Activated naive CD4-positive, alpha-beta T cell treated with anti-CD3 and anti-CD28 coated beads for 36 hours (primary cell): ENCODE measurements at regions of chr2 and their contacts with region 1.

Region 1: DNA sequence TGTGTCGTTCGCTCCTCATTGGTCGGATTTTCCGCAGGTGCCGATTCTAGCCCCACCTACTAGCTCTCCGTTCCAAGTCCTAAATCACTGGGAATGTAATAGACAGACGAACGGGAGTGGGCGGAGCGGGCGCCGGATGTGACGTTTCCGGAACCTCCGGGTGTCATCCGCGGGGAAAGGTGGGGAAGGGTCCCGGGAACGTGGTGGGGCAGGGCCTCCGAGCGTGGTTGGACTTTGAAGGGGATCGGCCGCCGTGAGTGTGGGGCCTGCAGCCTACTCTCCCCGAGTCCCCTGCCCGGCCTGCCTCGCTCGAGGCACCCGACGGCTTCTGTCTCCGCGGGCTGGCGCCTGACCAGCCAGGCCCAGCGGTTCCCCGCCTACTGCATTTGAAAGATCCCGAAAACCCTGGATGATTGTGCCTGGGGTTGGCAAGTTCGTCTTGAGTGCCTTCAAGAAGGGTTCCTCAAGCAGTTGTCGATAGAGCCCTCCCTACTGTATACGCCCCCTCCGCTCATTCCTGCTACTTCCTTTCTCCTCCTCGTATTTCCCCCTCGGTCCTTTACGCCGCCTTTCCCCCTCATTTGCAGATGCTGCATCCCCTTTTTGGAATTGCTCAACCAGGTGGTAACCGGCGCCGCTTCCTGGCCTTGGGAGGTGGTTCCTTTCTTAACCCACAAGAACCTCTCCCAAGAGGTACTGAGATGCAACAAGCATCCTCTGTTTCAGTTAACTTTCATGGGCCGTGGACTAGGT is at the start of gene STAMBP:
- DNase-seq: peak; percentile 96
- H3K4me3 Mint-ChIP-seq: peak within 1 kb of the TSS; percentile 94
- H3K27ac Mint-ChIP-seq: peak within 1 kb of the TSS; percentile 94
- H3K4me1 Mint-ChIP-seq: peaks cover 43% of the 10 kb centered on the region
- H3K27me3 Mint-ChIP-seq: no peaks in the 10 kb centered on the region
- total RNA-seq, gene STAMBP: 80.5 to 80.7 TPM

Region 2: DNA sequence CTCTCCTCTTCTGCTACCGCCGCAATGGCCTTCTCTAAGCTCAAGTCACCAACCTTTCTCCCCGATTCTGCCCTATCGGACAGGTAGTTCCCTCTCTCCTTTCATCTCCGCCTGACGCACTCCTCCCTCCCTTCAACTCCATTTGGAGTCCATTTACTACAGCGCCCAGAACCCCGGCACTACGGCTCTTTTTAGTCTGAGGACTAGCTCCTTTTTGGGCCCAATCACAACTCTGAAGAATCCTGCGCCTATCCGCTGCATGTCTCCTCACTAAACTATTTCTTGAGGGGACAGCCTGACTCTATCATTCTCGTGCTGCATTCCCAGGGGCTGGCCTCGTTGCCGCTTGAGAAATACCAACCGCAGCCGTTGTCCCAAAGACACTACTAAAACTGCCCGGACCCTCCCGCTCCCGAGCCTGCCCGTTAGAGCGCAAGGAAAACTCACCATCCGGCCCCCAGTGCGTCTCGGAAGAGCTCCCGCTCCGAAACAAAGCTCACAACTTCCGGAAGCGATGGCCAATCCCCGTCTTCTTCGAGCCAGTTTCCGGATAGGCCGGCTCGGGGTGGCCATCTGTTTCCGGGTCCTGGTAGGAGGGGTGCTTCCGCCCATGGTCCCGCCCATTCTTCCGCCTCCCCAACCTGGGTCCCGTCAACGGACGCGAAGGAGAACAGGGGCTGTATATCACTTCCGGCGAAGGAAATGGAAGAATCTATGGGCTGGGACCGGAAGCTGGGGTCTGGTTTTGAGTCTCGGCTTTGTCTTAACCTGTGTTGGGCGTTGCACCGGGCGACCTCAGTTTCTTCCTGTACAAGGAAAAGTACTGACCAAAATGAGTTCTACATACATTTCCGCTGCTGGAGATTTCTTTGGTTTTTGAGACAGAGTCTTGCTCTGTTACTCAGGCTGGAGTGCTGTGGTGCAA is 91.9 kb before region 1 on chr2 and contains the start of gene TPRKB:
- CTCF ChIA-PET with region 1: interaction called, 3 read pairs
- intact Hi-C with region 1: loop called (anchors 1 kb)
- DNase-seq: peak; percentile 99
- H3K4me3 Mint-ChIP-seq: peak within 1 kb of the TSS; percentile 88
- H3K27ac Mint-ChIP-seq: peak within 1 kb of the TSS; percentile 76
- H3K4me1 Mint-ChIP-seq: peaks cover 15% of the 10 kb centered on the region
- H3K27me3 Mint-ChIP-seq: no peaks in the 10 kb centered on the region
- total RNA-seq, gene TPRKB: 30.5 to 32.5 TPM

Region 3: GRCh38 chr2:73859721-73860586 is 31.0 kb after region 1 on chr2:
- CTCF ChIA-PET with region 1: interaction called, 3 read pairs
- intact Hi-C with region 1: loop called (anchors 1 kb)
- DNase-seq: peak; percentile 73
- H3K4me3 Mint-ChIP-seq: no peak overlapping the region
- H3K27ac Mint-ChIP-seq: no peak overlapping the region
- H3K4me1 Mint-ChIP-seq: peaks cover 15% of the 10 kb centered on the region
- H3K27me3 Mint-ChIP-seq: no peaks in the 10 kb centered on the region

Region 4: GRCh38 chr2:73926493-73927338 is 97.7 kb after region 1 on chr2 and contains the start of gene DGUOK:
- CTCF ChIA-PET with region 1: interaction called, 8 read pairs
- intact Hi-C with region 1: loop called (anchors 1 kb)
- DNase-seq: peak; percentile 99
- H3K4me3 Mint-ChIP-seq: peak within 1 kb of the TSS; percentile 87
- H3K27ac Mint-ChIP-seq: peak within 1 kb of the TSS; percentile 94
- H3K4me1 Mint-ChIP-seq: peaks cover 44% of the 10 kb centered on the region
- H3K27me3 Mint-ChIP-seq: no peaks in the 10 kb centered on the region
- total RNA-seq, gene DGUOK: 112 to 115 TPM

Region 5: DNA sequence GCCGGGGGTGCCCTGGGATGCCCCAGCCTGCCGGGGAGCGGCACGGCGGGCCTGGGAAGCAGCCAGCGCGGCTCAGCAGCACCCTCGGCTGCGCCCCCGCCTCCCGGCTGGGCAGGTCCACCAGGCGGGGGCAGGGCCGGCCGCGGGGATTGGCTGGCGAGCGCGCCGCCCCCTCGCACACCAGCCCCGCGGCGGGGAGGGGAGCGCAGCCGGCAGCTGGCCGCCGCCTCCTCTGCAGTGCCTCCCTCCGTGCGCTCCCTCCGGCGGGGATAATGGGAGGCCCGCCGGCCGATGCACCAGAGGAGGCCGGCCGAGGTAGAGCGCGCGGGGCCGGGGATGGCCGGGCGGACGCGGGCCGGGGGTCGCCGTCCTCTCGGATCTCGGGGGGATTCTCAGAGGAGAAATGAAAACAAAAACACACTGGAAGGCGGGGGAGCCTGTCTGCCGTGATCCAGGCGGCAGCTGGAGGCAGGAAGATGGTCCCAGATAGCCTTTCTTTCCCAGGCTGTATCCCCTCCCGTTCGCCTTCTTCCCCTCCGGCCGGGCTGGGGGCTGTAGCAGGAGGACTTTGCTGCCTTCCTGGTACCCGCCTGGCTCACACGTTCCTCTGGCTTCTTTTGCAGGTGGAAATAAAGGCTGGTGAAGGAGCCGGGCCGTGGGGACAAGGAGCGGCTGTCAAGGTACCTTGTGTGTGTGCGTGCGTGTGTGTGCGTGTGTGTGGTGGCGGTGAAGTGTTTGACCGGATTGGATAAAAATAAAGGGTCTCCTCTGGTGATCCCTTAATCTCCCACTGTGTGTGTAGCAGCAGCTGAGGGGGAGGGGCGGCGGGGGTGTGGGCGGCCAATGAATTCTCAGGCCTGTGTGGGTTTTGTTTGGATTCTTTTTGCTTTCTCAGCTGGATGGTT is 173.7 kb after region 1 on chr2:
- CTCF ChIA-PET with region 1: interaction called, 9 read pairs
- intact Hi-C with region 1: loop called (anchors 1 kb)
- DNase-seq: peak; percentile 39
- H3K4me3 Mint-ChIP-seq: peak overlapping the region; percentile 67
- H3K27ac Mint-ChIP-seq: peak overlapping the region; percentile 69
- H3K4me1 Mint-ChIP-seq: peaks cover 83% of the 10 kb centered on the region
- H3K27me3 Mint-ChIP-seq: no peaks in the 10 kb centered on the region

Region 6: DNA sequence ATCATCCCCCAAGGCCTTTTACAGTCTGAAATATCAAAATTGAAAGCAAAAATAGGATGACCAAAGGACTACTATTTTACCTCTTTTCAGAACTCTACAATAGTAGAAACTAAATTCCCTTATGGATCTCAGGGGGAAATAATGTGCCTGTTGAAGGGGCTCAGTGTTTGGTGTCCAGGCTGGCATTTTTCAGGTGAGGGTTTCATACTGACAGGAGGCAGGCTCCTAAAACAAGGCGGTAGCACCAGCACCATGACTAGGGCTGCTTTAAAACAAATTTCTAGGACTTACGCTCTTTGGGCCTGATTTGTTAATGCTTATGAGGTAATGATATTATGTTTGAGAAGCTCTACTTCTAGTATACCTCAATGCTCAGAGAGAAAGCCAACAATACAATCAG is 324.0 kb after region 1 on chr2:
- CTCF ChIA-PET with region 1: interaction called, 66 read pairs
- intact Hi-C with region 1: no loop called
- DNase-seq: no peak
- H3K4me3 Mint-ChIP-seq: no peak overlapping the region
- H3K27ac Mint-ChIP-seq: peak overlapping the region; percentile 20
- H3K4me1 Mint-ChIP-seq: no peaks in the 10 kb centered on the region
- H3K27me3 Mint-ChIP-seq: no peaks in the 10 kb centered on the region

Region 7: GRCh38 chr2:74334931-74335333 is 505.9 kb after region 1 on chr2:
- CTCF ChIA-PET with region 1: interaction called, 24 read pairs
- intact Hi-C with region 1: loop called (anchors 1 kb)
- DNase-seq: peak; percentile 86
- H3K4me3 Mint-ChIP-seq: no peak overlapping the region
- H3K27ac Mint-ChIP-seq: no peak overlapping the region
- H3K4me1 Mint-ChIP-seq: no peaks in the 10 kb centered on the region
- H3K27me3 Mint-ChIP-seq: no peaks in the 10 kb centered on the region